Activated CD4-positive, alpha-beta T cell treated with anti-CD3 and anti-CD28 coated beads, Interleukin-2, amount 10 ng/mL, durations not matched to agents 24 days and 14 days (primary cell): ENCODE measurements at regions of chr9 and their contacts with region 1.

Region 1: GRCh38 chr9:71768388-71769174 is at the start of gene CEMIP2:
- DNase-seq: peak; percentile 96
- H3K4me3 Mint-ChIP-seq: peak within 1 kb of the TSS; percentile 92
- H3K27ac Mint-ChIP-seq: peak within 1 kb of the TSS; percentile 93
- H3K4me1 Mint-ChIP-seq: peaks cover 35% of the 10 kb centered on the region
- H3K27me3 Mint-ChIP-seq: no peaks in the 10 kb centered on the region
- total RNA-seq, gene CEMIP2: 47.7 and 55.1 TPM in 2 replicates

Region 2: GRCh38 chr9:71254592-71255277 is 513.8 kb before region 1 on chr9:
- intact Hi-C with region 1: no loop called
- DNase-seq: no peak
- H3K4me3 Mint-ChIP-seq: no peak overlapping the region
- H3K27ac Mint-ChIP-seq: no peak overlapping the region
- H3K4me1 Mint-ChIP-seq: no peaks in the 10 kb centered on the region
- H3K27me3 Mint-ChIP-seq: peaks cover 3% of the 10 kb centered on the region

Region 3: GRCh38 chr9:71285191-71285656 is 483.4 kb before region 1 on chr9:
- intact Hi-C with region 1: loop called (anchors 2 kb)
- DNase-seq: peak; percentile 77
- H3K4me3 Mint-ChIP-seq: no peak overlapping the region
- H3K27ac Mint-ChIP-seq: no peak overlapping the region
- H3K4me1 Mint-ChIP-seq: no peaks in the 10 kb centered on the region
- H3K27me3 Mint-ChIP-seq: no peaks in the 10 kb centered on the region

Region 4: GRCh38 chr9:71716138-71716909 is 52.3 kb before region 1 on chr9:
- intact Hi-C with region 1: loop called (anchors 10 kb)
- DNase-seq: no peak
- H3K4me3 Mint-ChIP-seq: no peak overlapping the region
- H3K27ac Mint-ChIP-seq: no peak overlapping the region
- H3K4me1 Mint-ChIP-seq: peaks cover 6% of the 10 kb centered on the region
- H3K27me3 Mint-ChIP-seq: no peaks in the 10 kb centered on the region

Region 5: DNA sequence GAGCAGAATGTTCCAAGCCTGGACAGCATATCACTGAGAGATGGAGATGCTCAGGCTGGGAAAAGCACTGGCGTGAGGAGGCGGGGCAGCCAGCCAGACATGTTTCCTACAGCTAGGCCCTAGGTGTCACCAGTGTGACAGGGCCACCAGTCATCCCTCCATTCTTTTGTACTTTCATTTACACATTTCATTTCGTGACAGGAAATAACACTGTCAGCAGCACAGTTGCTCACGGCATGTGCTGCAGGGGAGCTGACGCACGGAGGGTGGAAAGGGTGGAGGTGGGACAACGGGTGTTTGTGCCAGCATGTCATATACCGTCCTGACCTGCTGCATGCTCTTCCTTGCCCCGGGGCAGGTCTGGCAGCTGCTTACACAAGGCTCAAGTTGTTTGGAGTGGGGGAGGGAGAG is 14.5 kb after region 1 on chr9:
- intact Hi-C with region 1: loop called (anchors 1 kb)
- DNase-seq: peak; percentile 94
- H3K4me3 Mint-ChIP-seq: peak overlapping the region; percentile 80
- H3K27ac Mint-ChIP-seq: peak overlapping the region; percentile 95
- H3K4me1 Mint-ChIP-seq: peaks cover 43% of the 10 kb centered on the region
- H3K27me3 Mint-ChIP-seq: no peaks in the 10 kb centered on the region

Region 6: DNA sequence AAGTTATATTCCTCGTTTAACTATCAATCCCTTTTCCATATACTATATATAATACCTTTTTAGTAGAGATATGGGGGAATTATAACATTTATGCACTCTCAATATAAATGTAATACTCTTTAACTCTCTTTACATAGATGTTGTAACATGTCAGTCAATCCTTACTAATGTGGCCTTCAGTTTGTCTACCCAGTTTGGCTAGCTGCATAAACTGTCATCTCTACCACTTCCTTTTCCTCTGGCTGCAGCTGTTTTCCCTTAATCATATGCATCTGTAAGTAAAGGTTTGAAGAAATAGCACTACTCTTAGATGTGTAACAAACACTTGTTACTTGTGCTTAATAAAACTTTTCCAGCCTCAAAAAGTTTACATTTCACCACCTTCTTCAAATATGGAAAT is 129.0 kb after region 1 on chr9:
- intact Hi-C with region 1: no loop called
- DNase-seq: peak; percentile 80
- H3K4me3 Mint-ChIP-seq: peak overlapping the region; percentile 49
- H3K27ac Mint-ChIP-seq: peak overlapping the region; percentile 42
- H3K4me1 Mint-ChIP-seq: peaks cover 72% of the 10 kb centered on the region
- H3K27me3 Mint-ChIP-seq: no peaks in the 10 kb centered on the region

Region 7: DNA sequence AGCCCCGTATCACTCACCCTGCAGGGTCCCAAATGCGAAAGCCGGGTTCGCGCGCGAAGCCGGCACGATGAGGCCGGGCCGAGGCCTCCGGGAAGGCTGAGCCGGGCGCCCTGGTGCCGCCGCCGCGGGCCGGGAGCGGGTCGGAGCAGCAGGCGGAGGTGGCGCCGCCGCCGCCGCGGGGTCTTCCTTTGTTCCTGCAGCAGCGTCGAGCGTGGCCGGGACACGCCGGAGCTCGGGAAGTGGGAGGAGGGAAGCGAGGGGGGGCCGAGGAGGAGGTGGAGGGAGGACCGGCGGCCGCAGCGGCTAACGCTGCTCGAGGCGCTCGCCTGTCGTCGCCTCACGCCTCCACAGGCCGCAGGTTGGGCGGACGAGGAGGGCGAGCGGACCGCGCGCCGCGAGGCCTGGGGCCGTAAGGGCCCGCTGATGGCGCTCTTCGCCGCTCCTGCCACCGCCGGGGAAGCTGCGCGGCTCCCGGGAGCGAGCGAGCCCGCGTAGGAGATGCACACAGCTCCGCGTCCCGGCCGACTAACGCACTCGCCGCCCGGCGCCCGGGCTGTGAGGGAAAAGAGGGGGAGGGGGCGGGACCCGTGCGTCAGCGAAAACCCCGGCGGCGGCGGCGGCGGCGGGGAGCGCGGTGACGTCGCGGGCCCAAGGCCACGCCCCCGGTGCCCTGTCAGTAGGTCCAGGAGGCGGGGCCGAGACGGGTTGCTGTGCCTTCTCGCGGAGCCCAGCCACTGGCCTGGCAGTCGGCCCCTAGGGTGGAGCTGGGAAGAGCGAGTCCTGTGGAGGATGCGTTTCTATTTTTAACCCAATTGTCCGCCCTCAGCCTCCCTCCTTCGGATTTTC is 596.3 kb after region 1 on chr9 and contains the start of gene ZFAND5:
- intact Hi-C with region 1: loop called (anchors 2 kb)
- DNase-seq: peak; percentile 97
- H3K4me3 Mint-ChIP-seq: peak within 1 kb of the TSS; percentile 91
- H3K27ac Mint-ChIP-seq: peak within 1 kb of the TSS; percentile 96
- H3K4me1 Mint-ChIP-seq: peaks cover 32% of the 10 kb centered on the region
- H3K27me3 Mint-ChIP-seq: no peaks in the 10 kb centered on the region
- total RNA-seq, gene ZFAND5: 115 and 121 TPM in 2 replicates